Left ventricle myocardium superior (tissue), 1 donor: ENCODE measurements at regions of chr21 and their contacts with region 1.

Region 1: GRCh38 chr21:42164064-42164789 is 54.7 kb upstream of the ABCG1 start:
- DNase-seq: peak; percentile 75
- ATAC-seq: peak; percentile 91

Region 2: GRCh38 chr21:42193131-42193671 is 29.0 kb after region 1 on chr21:
- intact Hi-C with region 1: loop called (anchors 2 kb)
- DNase-seq: no peak
- ATAC-seq: no peak

Region 3: DNA sequence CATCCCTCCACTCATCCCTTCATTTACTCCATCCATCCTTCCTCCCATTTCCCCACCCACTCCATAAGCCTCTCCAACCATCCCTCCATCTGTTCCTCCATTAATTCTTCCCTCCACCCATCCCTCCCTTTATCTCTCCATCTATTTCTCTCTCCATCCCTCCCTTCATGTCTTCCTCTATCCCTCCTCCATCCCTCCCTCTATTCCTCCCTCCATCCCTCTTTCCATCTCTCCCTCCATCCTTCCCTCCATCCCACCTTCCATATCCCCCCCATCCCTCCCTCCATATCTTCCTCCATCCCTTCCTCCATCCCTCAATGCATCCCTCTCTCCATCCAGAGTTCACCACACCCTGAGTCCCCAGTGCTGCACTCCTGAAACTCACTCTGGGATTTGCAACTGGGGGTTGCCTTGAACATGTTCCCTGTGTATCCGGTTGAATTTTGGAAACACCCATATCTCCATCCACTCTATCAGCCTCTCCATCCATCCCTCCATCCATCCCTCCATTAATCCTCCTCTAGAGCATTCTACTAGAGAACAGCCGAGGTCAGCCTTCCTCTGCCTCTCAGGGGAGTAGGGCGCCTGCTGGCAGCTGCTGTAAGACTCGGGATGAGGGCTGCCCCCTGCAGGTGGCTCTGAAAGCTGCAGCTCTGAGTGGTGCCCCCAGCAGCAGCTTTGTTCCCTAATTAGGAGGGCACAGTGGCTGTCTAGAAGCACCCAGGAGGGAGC is 94.1 kb after region 1 on chr21:
- intact Hi-C with region 1: loop called (anchors 10 kb)
- DNase-seq: peak; percentile 84
- ATAC-seq: peak; percentile 68